H1 (cell line): ENCODE measurements at regions of chr17 and their contacts with region 1.

Region 1: DNA sequence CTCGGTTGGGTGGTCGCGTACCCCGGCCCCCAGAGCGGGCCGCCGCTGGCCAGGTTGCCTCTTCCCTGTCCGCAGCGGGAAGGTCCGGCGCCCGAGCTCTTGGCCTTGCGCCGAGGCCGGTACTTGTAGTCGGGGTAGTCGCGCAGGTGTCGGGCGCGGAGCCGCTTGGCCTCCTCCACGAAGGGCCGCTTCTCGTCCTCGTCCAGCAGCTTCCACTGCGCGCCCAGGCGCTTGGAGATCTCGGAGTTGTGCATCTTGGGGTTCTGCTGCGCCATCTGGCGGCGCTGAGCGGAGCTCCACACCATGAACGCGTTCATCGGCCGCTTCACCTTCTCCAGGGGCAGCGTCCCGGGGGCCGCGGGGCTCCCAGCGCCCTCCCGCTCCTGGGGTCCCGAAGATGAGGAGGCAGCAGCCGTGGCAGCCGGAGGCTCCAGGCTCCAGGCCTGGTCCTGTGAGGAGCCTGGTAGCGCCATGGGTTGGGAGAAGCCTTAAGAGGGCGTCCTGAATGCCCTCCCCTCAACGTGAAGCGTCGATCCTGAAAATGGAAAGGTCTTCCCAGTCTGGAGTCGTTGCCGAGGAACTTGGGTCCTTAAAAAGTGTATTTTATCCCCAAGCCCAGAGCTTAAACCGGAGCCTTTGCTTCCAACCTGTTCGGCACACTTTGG is 558 bp downstream of the SOX15 start:
- DNase-seq: peak in 1 of 2 experiments; percentile 91
- H3K4me3 ChIP-seq: peak overlapping the region; percentile 59 to 73 (median 69)
- H3K27ac ChIP-seq: no peak overlapping the region
- H3K4me1 ChIP-seq: peaks cover 6 to 23% (median 18%) of the 10 kb centered on the region in 4 experiments
- H3K27me3 ChIP-seq: no peaks in the 10 kb centered on the region
- CTCF ChIP-seq: peak; percentile 86 to 92 (median 91)
- EP300 ChIP-seq: no peak
- POLR2A ChIP-seq: peak in 1 of 2 experiments; percentile 59; a peak in 2 of 3 replicates
- RAD21 ChIP-seq: peak; percentile 66 to 83

Region 2: DNA sequence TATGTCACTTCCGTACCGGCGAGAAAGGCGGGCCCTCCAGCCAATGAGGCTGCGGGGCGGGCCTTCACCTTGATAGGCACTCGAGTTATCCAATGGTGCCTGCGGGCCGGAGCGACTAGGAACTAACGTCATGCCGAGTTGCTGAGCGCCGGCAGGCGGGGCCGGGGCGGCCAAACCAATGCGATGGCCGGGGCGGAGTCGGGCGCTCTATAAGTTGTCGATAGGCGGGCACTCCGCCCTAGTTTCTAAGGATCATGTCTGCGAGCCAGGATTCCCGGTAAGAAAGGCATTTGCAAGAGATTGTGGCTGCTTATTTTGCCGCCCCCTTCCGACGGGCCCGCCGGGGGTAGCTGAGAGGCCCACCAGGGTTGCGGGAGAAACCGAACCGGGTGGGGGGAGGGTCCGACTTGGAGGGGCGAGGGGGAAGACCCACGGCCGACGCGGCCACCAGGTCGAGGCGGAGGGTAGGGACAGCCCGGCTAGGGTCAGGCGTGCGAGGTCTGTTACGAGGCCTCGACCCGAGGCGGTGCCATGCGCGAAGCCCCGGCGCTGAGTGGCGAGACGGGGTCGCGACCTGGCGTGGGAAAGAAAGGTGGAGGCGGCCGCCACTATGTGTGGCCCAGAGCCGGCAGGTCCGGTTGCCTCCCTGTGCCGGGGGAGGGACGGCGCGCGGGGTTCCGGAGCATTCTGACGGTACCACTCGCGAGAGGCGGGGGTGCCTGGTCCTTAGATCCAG is 16.6 kb before region 1 on chr17:
- CTCF ChIA-PET with region 1: interaction called, 24 read pairs
- POLR2A ChIA-PET with region 1: interaction called, 1,144 read pairs
- DNase-seq: peak; percentile 100
- H3K4me3 ChIP-seq: peak overlapping the region; percentile 97 to 99 (median 98)
- H3K27ac ChIP-seq: peak overlapping the region; percentile 99
- H3K4me1 ChIP-seq: peaks cover 4 to 10% (median 7%) of the 10 kb centered on the region in 4 experiments
- H3K27me3 ChIP-seq: no peaks in the 10 kb centered on the region
- CTCF ChIP-seq: no peak
- EP300 ChIP-seq: no peak
- POLR2A ChIP-seq: peak; percentile 96 to 98
- RAD21 ChIP-seq: no peak

Region 3: GRCh38 chr17:7614422-7615264 is 25.3 kb after region 1 on chr17 and contains the start of gene FXR2:
- CTCF ChIA-PET with region 1: interaction called, 11 read pairs
- POLR2A ChIA-PET with region 1: interaction called, 20 read pairs
- DNase-seq: peak; percentile 97 to 100
- H3K4me3 ChIP-seq: peak within 1 kb of the TSS; percentile 87 to 95 (median 92)
- H3K27ac ChIP-seq: peak within 1 kb of the TSS; percentile 52; the same call in 1 of the 2 replicates
- H3K4me1 ChIP-seq: peaks cover 0 to 5% (median 1%) of the 10 kb centered on the region in 4 experiments; a peak in 4 of 7 replicates
- H3K27me3 ChIP-seq: no peaks in the 10 kb centered on the region
- CTCF ChIP-seq: peak; percentile 62 to 76 (median 64)
- EP300 ChIP-seq: no peak
- POLR2A ChIP-seq: peak in 1 of 2 experiments; percentile 24; a peak in 1 of 3 replicates
- RAD21 ChIP-seq: peak; percentile 14 to 29
- total RNA-seq, gene FXR2: 26.2 and 26.8 TPM in 2 replicates

Region 4: DNA sequence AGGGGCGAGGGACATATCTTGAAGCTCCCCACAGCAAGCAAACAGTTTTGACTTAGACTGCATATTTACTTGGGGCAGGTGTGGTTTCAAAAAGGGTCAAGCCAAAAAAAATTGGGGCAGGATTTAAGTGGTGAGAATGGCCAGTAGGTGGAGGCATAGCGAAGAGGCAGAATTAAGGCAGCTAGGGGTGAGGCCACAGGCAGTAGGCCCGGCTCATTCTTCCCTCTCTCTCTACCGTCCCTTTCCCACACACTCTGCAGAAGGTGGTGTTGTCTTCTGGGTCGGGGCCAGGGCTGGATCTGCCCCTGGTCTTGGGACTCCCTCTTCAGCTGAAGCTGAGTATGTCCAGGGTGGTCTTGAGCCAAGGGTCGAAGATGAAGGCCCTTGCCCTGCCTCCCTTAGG is 43.2 kb after region 1 on chr17:
- CTCF ChIA-PET with region 1: interaction called, 20 read pairs
- POLR2A ChIA-PET with region 1: interaction called, 33 read pairs
- DNase-seq: peak; percentile 39 to 66
- H3K4me3 ChIP-seq: no peak overlapping the region
- H3K27ac ChIP-seq: no peak overlapping the region
- H3K4me1 ChIP-seq: peaks cover 0 to 12% (median 3%) of the 10 kb centered on the region in 4 experiments; a peak in 3 of 7 replicates
- H3K27me3 ChIP-seq: no peaks in the 10 kb centered on the region
- CTCF ChIP-seq: peak; percentile 61 to 85 (median 79)
- EP300 ChIP-seq: no peak
- POLR2A ChIP-seq: no peak
- RAD21 ChIP-seq: peak; percentile 75 to 81

Region 5: GRCh38 chr17:7667656-7668406 is 78.5 kb after region 1 on chr17:
- CTCF ChIA-PET with region 1: interaction called, 13 read pairs
- POLR2A ChIA-PET with region 1: interaction called, 36 read pairs
- DNase-seq: no peak
- H3K4me3 ChIP-seq: no peak overlapping the region
- H3K27ac ChIP-seq: no peak overlapping the region
- H3K4me1 ChIP-seq: 0 out of 7 replicates have a peak, but pooled peaks cover 0 to 2% (median 0%) of the 10 kb centered on the region in 4 experiments
- H3K27me3 ChIP-seq: no peaks in the 10 kb centered on the region
- CTCF ChIP-seq: no peak
- EP300 ChIP-seq: no peak
- POLR2A ChIP-seq: peak in 1 of 2 experiments; percentile 30; a peak in 1 of 3 replicates
- RAD21 ChIP-seq: no peak

Region 6: GRCh38 chr17:7703584-7704479 is 114.5 kb after region 1 on chr17:
- CTCF ChIA-PET with region 1: interaction called, 10 read pairs
- POLR2A ChIA-PET with region 1: interaction called, 19 read pairs
- DNase-seq: peak; percentile 61 to 77
- H3K4me3 ChIP-seq: peak overlapping the region; percentile 56 to 86 (median 66); a peak in 5 of 8 replicates
- H3K27ac ChIP-seq: peak overlapping the region; percentile 80; the same call in 1 of the 2 replicates
- H3K4me1 ChIP-seq: peaks cover 2 to 19% (median 16%) of the 10 kb centered on the region in 4 experiments
- H3K27me3 ChIP-seq: peaks cover 0 to 3% (median 1%) of the 10 kb centered on the region in 4 experiments; a peak in 2 of 7 replicates
- CTCF ChIP-seq: no peak
- EP300 ChIP-seq: peak in 1 of 2 experiments; percentile 76; a peak in 1 of 3 replicates
- POLR2A ChIP-seq: peak in 1 of 2 experiments; percentile 29; a peak in 1 of 3 replicates
- RAD21 ChIP-seq: no peak